K562 (cell line): ENCODE measurements at regions of chr19 and their contacts with region 1.

Region 1: DNA sequence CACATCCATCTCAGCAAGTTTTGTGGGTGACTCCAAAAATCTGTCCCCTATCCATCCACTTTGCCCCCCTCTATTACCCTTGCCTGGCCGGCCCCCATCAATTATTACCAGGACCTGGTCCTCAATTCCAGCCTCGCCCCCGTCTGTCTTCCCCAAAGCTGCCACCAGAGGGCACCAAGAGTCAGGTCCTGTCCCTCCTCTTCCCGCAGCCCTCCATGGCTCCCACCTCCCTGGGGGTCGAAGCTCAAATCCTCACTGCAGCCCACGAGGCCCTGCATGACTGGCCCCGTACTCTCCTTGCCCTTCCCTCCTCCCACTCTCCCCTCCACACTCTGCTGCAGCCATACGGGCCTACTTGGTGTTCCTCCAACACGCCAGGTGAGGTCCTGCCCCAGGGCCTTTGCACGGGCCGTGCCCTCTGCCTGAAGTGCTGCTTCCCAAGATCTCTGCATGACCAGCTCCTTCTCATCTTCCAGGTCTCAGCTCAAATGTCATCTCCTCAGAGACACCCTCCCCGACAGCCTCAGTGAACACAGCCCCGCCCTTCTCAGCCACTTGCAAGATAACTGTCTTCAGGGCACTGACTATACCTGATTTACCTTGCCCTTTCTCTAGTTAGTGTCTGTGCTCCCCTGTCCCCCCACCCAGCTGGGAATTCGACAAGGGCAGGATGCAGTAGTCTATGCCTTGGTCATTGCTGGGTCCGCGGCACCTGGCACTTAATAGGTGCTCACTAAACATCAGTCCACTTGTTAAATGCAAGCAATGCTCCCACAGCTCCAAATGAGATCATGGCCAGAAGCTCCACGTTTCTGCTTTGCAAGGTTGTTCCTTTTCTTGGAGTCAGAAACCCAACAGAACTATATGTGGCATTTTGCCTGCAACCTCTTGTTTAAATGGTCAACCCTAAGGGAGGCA is 16.8 kb upstream of the SEMA6B start:
- DNase-seq: peak; percentile 74 to 81 (median 78)
- ATAC-seq: peak; percentile 69
- H3K4me3 ChIP-seq: no peak overlapping the region
- H3K27ac ChIP-seq: peak overlapping the region; percentile 54; the same call in 1 of the 3 replicates
- H3K4me1 ChIP-seq: peaks cover 25 to 57% of the 10 kb centered on the region in 2 experiments
- H3K27me3 ChIP-seq: no peaks in the 10 kb centered on the region
- CTCF ChIP-seq: peak; percentile 75 to 89 (median 76)
- EP300 ChIP-seq: no peak
- POLR2A ChIP-seq: no peak
- RAD21 ChIP-seq: peak; percentile 44 to 71

Region 2: GRCh38 chr19:4633140-4633967 is 57.1 kb after region 1 on chr19:
- CTCF ChIA-PET with region 1: interaction called, 25 read pairs
- POLR2A ChIA-PET with region 1: interaction called, 4 read pairs
- in situ Hi-C with region 1: loop called (anchors 5 kb)
- intact Hi-C with region 1: loop called (anchors 1 kb)
- DNase-seq: peak; percentile 81 to 88 (median 82)
- ATAC-seq: peak; percentile 89
- H3K4me3 ChIP-seq: no peak overlapping the region
- H3K27ac ChIP-seq: peak overlapping the region; percentile 53; the same call in 2 of the 3 replicates
- H3K4me1 ChIP-seq: peaks cover 25 to 35% of the 10 kb centered on the region in 2 experiments
- H3K27me3 ChIP-seq: no peaks in the 10 kb centered on the region
- CTCF ChIP-seq: peak; percentile 91 to 98 (median 94)
- EP300 ChIP-seq: no peak; the same call in none of the 2 replicates
- POLR2A ChIP-seq: no peak
- RAD21 ChIP-seq: peak; percentile 37 to 74

Region 3: DNA sequence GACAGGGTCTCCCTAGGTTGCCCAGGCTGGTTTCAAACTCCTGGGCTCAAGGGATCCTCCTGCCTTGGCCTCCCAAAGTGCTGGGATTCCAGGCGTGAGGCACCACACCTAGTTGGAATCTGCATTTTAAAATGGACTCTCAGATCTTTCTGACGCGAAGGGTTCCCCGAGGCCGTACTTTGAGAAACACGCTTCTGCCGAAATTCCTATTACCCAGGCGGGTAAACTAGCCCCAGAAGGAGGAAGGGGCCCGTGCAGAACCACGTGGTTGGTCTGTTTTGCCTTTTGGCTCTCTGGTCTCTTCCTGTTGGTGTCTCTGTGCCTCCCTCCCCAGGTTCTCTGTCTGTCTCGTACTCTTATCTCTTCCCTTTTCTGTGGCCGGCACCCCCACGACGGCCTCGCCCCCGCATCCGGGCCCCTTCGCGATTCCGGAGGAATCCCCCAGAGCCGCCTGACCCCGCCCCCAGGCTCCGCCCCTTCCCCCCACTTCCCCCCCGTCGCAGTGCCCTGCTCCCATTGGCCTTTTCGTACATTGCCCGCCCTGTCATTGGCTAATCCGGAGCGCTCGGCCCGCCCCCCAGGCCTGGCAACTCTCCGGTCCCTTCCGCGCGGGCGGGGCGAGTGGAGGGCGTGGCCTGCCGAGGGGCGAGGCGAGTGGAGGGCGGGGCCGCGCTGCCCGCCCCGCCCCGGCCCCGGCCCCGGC is 62.7 kb after region 1 on chr19 and contains the start of gene TNFAIP8L1:
- CTCF ChIA-PET with region 1: interaction called, 25 read pairs
- POLR2A ChIA-PET with region 1: interaction called, 4 read pairs
- in situ Hi-C with region 1: loop called (anchors 5 kb)
- intact Hi-C with region 1: loop called (anchors 1 kb)
- DNase-seq: peak; percentile 96 to 100 (median 100)
- ATAC-seq: peak; percentile 92
- H3K4me3 ChIP-seq: peak within 1 kb of the TSS; percentile 71
- H3K27ac ChIP-seq: peak within 1 kb of the TSS; percentile 93
- H3K4me1 ChIP-seq: peaks cover 31 to 61% of the 10 kb centered on the region in 2 experiments
- H3K27me3 ChIP-seq: no peaks in the 10 kb centered on the region
- CTCF ChIP-seq: no peak
- EP300 ChIP-seq: peak; percentile 63; the same call in 1 of the 2 replicates
- POLR2A ChIP-seq: no peak; the same call in 1 of the 2 replicates
- RAD21 ChIP-seq: no peak
- polyA plus RNA-seq, gene TNFAIP8L1: 0.69 to 1.0 TPM

Region 4: GRCh38 chr19:4791170-4792018 is 215.1 kb after region 1 on chr19 and contains the start of gene FEM1A:
- CTCF ChIA-PET with region 1: no interaction called
- POLR2A ChIA-PET with region 1: no interaction called
- in situ Hi-C with region 1: loop called (anchors 10 kb)
- intact Hi-C with region 1: no loop called
- DNase-seq: peak; percentile 93 to 100 (median 95)
- ATAC-seq: peak; percentile 98
- H3K4me3 ChIP-seq: peak within 1 kb of the TSS; percentile 93
- H3K27ac ChIP-seq: peak within 1 kb of the TSS; percentile 98
- H3K4me1 ChIP-seq: peaks cover 14 to 49% of the 10 kb centered on the region in 2 experiments
- H3K27me3 ChIP-seq: no peaks in the 10 kb centered on the region
- CTCF ChIP-seq: peak; percentile 93 to 100 (median 99)
- EP300 ChIP-seq: no peak
- POLR2A ChIP-seq: peak; percentile 86
- RAD21 ChIP-seq: peak; percentile 90 to 92
- polyA plus RNA-seq, gene FEM1A: 0.08 to 0.11 TPM